ENCODE measurements at regions of chr6 and their contacts with region 1.

Region 1: GRCh38 chr6:133923938-133924593 is 29.0 kb upstream of the TBPL1 start:
- DNase-seq: peak; percentile 70
- H3K27ac ChIP-seq: no peak overlapping the region
- CTCF ChIP-seq: peak; percentile 83

Region 2: GRCh38 chr6:133568970-133569889 is 354.8 kb before region 1 on chr6:
- CTCF ChIA-PET with region 1: interaction called, 13 read pairs
- POLR2A ChIA-PET with region 1: no interaction called
- DNase-seq: peak; percentile 97
- H3K27ac ChIP-seq: peak overlapping the region; percentile 39; the same call in 1 of the 2 replicates
- CTCF ChIP-seq: peak; percentile 99

Region 3: GRCh38 chr6:134063966-134064445 is 139.9 kb after region 1 on chr6:
- CTCF ChIA-PET with region 1: interaction called, 17 read pairs
- POLR2A ChIA-PET with region 1: no interaction called
- DNase-seq: peak; percentile 70
- H3K27ac ChIP-seq: no peak overlapping the region
- CTCF ChIP-seq: peak; percentile 82

Region 4: GRCh38 chr6:134097114-134097707 is 173.1 kb after region 1 on chr6:
- CTCF ChIA-PET with region 1: interaction called, 98 read pairs
- POLR2A ChIA-PET with region 1: no interaction called
- DNase-seq: peak; percentile 70
- H3K27ac ChIP-seq: no peak overlapping the region
- CTCF ChIP-seq: peak; percentile 62

Measured in RWPE1 (cell line).